ENCODE measurements at regions of chr1 and their contacts with region 1.

Region 1: DNA sequence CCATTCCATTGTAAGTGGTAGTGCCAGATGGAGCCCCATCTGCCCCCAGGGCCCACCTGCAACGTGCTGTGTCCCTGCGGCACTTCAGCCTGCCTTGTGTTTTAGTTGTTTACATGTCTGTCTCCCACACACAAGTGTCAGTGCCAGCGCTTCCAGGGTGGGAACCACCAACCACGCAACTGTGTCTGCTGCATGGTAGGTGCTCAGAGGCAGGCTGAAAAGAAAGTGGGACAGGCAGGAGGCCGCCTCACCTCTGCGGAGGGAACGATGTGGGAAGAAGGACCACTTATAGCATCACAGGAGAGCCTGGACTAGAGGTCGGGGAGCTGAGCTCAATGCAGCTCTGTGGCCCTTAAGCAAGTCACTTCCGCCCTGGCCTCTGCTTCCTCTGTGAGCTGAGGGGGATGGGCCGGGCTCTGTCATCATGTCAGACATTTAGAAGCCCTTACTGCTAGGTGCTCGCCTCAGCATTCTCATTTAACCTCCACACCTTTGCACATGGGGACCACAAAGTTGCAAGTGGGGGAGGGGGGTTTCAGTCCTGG is 17.9 kb downstream of the SLC9A1 start:
- DNase-seq: peak; percentile 80
- ATAC-seq: peak; percentile 96
- H3K4me3 Mint-ChIP-seq: peak overlapping the region; percentile 92
- H3K27ac Mint-ChIP-seq: peak overlapping the region; percentile 100
- H3K4me1 Mint-ChIP-seq: peaks cover 41% of the 10 kb centered on the region
- H3K27me3 Mint-ChIP-seq: no peaks in the 10 kb centered on the region

Region 2: DNA sequence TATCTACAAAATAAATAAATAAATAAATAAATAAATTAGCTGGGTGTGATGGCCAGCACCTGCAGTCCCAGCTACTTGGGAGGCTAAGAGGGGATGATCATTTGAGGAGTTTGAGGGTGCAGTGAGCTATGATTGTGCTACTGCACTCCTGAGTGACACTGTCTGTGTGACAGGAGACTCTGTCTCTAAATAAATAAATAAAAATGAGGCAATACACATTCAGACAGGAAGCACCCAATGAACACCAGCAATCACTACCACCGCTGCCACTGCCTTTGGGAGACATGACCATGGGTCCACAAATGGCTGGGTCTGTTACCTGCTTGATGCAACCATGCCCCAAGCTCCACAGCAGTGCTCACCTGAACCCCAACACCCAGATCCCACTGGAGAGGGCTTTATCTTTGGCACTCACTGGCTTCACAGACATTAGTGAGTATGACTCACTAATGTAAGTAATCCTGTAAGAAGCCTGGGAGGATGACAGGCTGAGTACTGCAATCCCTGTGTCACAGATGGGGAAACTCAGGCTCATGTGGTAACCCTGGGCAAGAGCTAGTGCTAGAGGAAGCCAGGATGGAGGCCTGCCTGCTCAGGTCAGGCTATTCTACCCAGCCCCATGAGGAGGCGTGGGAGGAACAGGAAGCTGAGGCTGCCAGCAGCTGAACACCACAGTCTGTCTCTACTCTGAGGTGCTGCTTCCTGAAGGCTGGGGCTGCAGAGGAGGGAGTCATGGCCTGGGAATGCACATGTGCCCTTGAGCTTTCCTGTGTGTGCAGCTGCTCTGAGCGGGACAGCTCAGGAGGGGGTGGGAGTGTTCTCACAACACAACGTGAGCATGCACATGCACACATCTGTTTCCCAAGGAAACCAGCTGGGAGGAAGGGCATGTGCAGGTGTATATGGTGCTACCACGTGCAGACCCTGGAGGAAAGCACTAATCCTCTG is 25.2 kb before region 1 on chr1:
- POLR2A ChIA-PET with region 1: interaction called, 35 read pairs
- DNase-seq: peak; percentile 66
- ATAC-seq: peak; percentile 96
- H3K4me3 Mint-ChIP-seq: peak overlapping the region; percentile 59
- H3K27ac Mint-ChIP-seq: peak overlapping the region; percentile 94
- H3K4me1 Mint-ChIP-seq: peaks cover 60% of the 10 kb centered on the region
- H3K27me3 Mint-ChIP-seq: no peaks in the 10 kb centered on the region

Region 3: GRCh38 chr1:27154991-27155781 is 18.1 kb after region 1 on chr1 and contains the start of gene SLC9A1:
- POLR2A ChIA-PET with region 1: interaction called, 127 read pairs
- DNase-seq: peak; percentile 96
- ATAC-seq: peak; percentile 90
- H3K4me3 Mint-ChIP-seq: peak within 1 kb of the TSS; percentile 96
- H3K27ac Mint-ChIP-seq: peak within 1 kb of the TSS; percentile 98
- H3K4me1 Mint-ChIP-seq: peaks cover 42% of the 10 kb centered on the region
- H3K27me3 Mint-ChIP-seq: no peaks in the 10 kb centered on the region
- total RNA-seq, gene SLC9A1: 23.7 to 24.5 TPM

Region 4: GRCh38 chr1:27166351-27166802 is 29.3 kb after region 1 on chr1:
- POLR2A ChIA-PET with region 1: no interaction called
- DNase-seq: no peak
- ATAC-seq: no peak
- H3K4me3 Mint-ChIP-seq: no peak overlapping the region
- H3K27ac Mint-ChIP-seq: no peak overlapping the region
- H3K4me1 Mint-ChIP-seq: peaks cover 8% of the 10 kb centered on the region
- H3K27me3 Mint-ChIP-seq: no peaks in the 10 kb centered on the region

Measured in activated naive CD8-positive, alpha-beta T cell treated with anti-CD3 and anti-CD28 coated beads, Interleukin-2, amount 10 ng/mL, durations not matched to agents 7 days and 5 days (primary cell).